ENCODE measurements at regions of chr18 and their contacts with region 1.

Region 1: GRCh38 chr18:55489034-55489986 is 98.7 kb downstream of the TCF4 start:
- DNase-seq: no peak
- H3K4me3 ChIP-seq: no peak overlapping the region
- H3K27ac ChIP-seq: no peak overlapping the region
- H3K4me1 ChIP-seq: peaks cover 23% of the 10 kb centered on the region
- H3K27me3 ChIP-seq: no peaks in the 10 kb centered on the region
- CTCF ChIP-seq: no peak
- POLR2A ChIP-seq: no peak

Region 2: DNA sequence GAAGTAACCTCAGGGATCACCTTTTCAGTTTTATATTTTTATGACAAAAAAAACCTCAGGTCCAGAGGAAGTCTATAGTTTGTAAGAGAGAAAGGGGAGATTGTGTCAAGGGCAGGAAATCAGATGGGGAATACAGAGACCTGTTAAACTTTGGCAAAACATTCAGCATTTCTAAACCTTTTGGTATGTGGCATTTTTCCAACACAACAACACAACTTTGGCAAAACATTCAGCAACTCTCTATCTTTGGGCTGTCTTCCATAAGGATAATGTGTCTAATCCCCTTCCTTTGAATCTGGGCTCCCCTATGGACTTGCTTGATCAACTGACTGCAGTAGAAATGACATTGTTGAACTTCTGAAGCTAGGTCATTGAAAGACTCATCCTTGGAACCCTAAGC is 309.5 kb before region 1 on chr18:
- intact Hi-C with region 1: no loop called
- DNase-seq: no peak
- H3K4me3 ChIP-seq: no peak overlapping the region
- H3K27ac ChIP-seq: no peak overlapping the region
- H3K4me1 ChIP-seq: no peaks in the 10 kb centered on the region
- H3K27me3 ChIP-seq: no peaks in the 10 kb centered on the region
- CTCF ChIP-seq: no peak
- POLR2A ChIP-seq: no peak

Region 3: GRCh38 chr18:55433648-55434047 is 55.7 kb before region 1 on chr18:
- intact Hi-C with region 1: loop called (anchors 10 kb)
- DNase-seq: no peak
- H3K4me3 ChIP-seq: no peak overlapping the region
- H3K27ac ChIP-seq: no peak overlapping the region
- H3K4me1 ChIP-seq: no peaks in the 10 kb centered on the region
- H3K27me3 ChIP-seq: no peaks in the 10 kb centered on the region
- CTCF ChIP-seq: no peak
- POLR2A ChIP-seq: no peak

Region 4: GRCh38 chr18:56083097-56083521 is 593.8 kb after region 1 on chr18:
- intact Hi-C with region 1: no loop called
- DNase-seq: no peak
- H3K4me3 ChIP-seq: no peak overlapping the region
- H3K27ac ChIP-seq: peak overlapping the region; percentile 28
- H3K4me1 ChIP-seq: peaks cover 23% of the 10 kb centered on the region
- H3K27me3 ChIP-seq: no peaks in the 10 kb centered on the region
- CTCF ChIP-seq: no peak
- POLR2A ChIP-seq: no peak